A673 (cell line): ENCODE measurements at regions of chr1 and their contacts with region 1.

Region 1: GRCh38 chr1:201418461-201418860 is 3.1 kb downstream of the TNNI1 start:
- DNase-seq: no peak
- H3K4me3 ChIP-seq: no peak overlapping the region
- H3K27ac ChIP-seq: no peak overlapping the region
- H3K4me1 ChIP-seq: no peaks in the 10 kb centered on the region
- H3K27me3 ChIP-seq: no peaks in the 10 kb centered on the region
- CTCF ChIP-seq: no peak

Region 2: DNA sequence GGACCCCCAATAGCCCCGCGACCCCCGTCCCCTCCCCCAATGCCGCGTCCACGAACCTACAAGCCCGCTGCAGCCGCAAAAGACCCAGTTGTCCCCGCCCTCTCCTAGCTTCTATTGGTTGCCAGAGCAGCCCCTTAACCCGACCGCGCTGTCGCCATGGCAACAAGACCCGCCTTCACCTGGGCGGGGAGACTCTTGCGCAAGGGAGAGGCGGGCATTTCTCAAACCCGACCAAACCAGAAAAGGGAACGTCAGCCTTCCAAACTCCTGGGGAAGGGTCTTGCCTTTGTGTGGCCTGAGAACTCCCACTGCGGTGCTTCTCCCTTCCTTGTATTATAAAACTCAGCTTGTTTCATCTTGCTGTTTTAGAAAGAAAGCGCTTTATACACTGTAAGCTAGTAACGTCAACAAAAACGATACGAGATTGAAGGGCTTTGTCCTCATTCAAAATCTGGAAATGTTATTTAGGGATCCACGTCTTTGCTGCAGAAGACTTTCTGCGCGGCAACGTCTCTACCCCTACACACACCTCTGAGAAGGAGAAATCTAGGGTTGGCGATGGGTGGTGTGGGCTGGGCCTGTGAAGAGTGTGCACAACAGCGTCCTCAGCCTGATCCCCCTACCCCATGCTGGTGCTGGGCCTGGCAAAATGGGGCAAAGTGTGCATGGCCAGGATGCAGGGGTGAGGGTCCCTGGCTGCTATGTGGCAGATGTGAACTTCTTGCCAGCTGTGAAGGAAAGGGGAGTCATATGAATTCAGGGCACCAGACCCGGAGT is 263.9 kb before region 1 on chr1 and contains the start of gene TMEM9:
- CTCF ChIA-PET with region 1: interaction called, 10 read pairs
- POLR2A ChIA-PET with region 1: no interaction called
- intact Hi-C with region 1: no loop called
- DNase-seq: peak; percentile 97
- H3K4me3 ChIP-seq: peak within 1 kb of the TSS; percentile 85
- H3K27ac ChIP-seq: peak within 1 kb of the TSS; percentile 68
- H3K4me1 ChIP-seq: peaks cover 10% of the 10 kb centered on the region
- H3K27me3 ChIP-seq: no peaks in the 10 kb centered on the region
- CTCF ChIP-seq: no peak
- total RNA-seq, gene TMEM9: 69.7 and 80.3 TPM in 2 replicates

Region 3: DNA sequence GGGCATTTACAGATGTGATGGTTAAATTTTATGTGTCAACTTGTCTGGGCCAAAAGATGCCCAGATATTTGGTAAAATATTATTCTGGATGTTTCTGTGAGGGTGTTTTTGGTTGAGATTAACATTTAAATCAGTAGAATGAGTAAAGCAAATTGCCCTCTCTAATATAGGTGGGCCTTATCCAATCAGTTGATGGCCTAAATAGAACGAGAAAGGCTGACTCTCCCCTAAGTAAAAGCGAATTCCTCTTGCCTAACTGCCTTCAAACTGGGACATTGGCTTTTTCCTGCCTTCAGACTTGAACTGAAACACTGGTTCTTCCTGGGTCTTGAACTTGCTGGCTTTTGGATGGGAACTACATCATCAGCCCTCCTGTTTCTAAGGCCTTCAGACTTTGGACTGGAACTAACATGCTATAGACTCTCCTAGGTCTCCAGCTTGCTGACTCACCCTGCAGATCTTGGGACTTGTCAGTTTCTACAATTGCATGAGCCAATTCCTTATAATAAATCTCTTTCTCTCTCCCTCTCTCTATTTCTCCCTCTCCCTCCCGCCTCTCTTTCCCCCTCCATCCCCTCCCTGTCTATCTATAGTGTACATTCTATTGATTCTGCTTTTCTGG is 110.3 kb after region 1 on chr1:
- CTCF ChIA-PET with region 1: no interaction called
- POLR2A ChIA-PET with region 1: no interaction called
- intact Hi-C with region 1: no loop called
- DNase-seq: no peak
- H3K4me3 ChIP-seq: no peak overlapping the region
- H3K27ac ChIP-seq: no peak overlapping the region
- H3K4me1 ChIP-seq: peaks cover 11% of the 10 kb centered on the region
- H3K27me3 ChIP-seq: no peaks in the 10 kb centered on the region
- CTCF ChIP-seq: no peak